OCI-LY7 (cell line): ENCODE measurements at regions of chr14 and their contacts with region 1.

Region 1: GRCh38 chr14:68795597-68796417 is 2.9 kb upstream of the ZFP36L1 start:
- DNase-seq: peak; percentile 90
- H3K4me3 ChIP-seq: peak overlapping the region; percentile 87
- H3K27ac ChIP-seq: peak overlapping the region; percentile 92
- H3K4me1 ChIP-seq: peaks cover 39% of the 10 kb centered on the region
- CTCF ChIP-seq: peak; percentile 71

Region 2: DNA sequence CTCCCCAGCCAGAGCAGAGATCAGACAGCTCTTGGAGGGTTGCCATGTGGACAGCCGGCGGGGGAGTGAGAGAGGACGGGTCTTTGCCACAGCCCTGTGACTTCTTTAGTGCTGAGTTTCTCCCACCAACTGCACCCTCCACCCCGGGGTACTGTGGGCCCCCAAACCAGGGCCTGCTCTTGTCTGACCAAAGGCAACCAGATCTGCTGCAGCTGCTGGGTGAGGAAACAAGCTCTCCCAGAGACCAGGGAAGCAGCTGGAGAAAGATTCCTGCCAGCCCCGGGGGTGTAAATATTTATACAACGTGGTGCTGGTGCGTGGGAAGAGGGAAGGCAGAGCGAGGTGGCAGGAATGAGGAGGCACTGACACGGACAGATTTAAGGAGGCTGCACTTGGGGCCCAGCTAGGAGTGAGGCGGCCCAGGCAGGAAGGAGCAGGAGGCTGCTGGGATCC is 11.4 kb after region 1 on chr14:
- CTCF ChIA-PET with region 1: no interaction called
- POLR2A ChIA-PET with region 1: interaction called, 126 read pairs
- intact Hi-C with region 1: loop called (anchors 1 kb)
- DNase-seq: peak; percentile 77
- H3K4me3 ChIP-seq: peak overlapping the region; percentile 40
- H3K27ac ChIP-seq: peak overlapping the region; percentile 75
- H3K4me1 ChIP-seq: peaks cover 33% of the 10 kb centered on the region
- CTCF ChIP-seq: no peak